Head of caudate nucleus (tissue), 42 donors: ENCODE measurements at regions of chr2 and their contacts with region 1.

Region 1: DNA sequence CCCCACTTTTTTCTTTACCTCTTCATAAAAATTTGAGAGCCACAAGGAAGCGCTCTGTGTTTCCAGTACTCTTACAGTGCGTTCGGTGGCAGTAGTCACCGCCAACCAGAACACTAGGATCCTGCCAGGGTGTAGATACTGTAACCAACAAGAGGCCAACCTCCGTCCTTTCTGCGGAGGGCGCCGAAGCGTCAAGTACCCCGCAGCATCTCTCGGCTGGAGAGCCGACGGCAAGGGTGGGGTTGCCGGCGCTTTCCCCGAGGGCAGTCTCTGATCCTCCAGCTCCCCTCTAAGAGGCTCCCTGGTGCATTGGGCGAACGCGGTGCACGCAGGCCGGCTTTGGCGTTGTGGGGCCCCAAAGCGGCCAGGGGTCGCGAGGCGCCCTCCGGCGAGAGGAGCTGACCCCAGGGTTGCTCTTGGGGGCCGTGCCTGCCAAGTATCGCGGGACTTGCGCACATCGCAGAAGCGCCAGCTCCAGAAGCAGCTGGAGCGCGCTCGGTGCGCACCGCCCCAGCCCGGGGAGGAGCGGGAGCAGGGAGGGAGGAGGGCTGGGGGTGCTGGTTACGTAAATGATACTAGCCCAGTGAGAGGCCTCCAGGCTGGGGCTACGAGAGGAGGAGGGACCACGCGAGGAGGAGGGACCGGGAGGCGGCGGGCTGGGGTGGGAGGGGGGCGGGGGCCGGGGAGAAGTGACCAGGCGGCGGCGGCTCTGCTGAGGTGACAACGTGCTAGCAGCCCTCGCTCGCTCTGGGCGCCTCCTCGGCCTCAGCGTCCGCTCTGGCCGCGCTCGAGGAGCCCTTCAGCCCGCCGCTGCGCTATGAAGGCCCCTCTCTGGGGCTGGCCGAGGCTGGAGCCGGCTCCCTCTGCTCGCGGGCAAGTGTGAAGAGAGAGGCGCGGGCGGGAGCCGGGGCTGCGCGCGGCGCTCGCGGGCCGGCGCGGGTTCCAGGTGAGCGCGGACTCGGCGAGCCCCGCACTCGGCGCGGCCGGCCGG is at the start of gene GALNT13:
- DNase-seq: peak; percentile 76 to 96 (median 91)

Region 2: DNA sequence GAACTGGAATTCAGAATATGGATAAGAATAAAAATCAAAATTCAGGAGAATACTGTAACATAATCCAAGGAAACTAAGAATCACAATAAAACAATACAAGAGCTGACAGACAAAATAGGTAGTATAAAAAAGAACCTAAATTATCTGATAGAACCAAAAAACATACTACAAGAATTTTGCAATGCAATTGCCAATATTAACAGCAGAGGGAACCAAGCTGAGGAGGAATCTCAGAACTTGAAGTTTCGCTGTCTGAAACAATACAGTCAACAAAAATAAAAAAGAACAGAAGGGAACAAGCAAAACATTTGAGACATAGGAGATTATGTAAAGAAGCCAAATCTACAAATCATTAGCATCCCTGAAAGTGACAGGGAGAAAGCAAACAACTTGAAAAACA is 83.9 kb before region 1 on chr2:
- intact Hi-C with region 1: loop called (anchors 10 kb)
- DNase-seq: no peak

Region 3: DNA sequence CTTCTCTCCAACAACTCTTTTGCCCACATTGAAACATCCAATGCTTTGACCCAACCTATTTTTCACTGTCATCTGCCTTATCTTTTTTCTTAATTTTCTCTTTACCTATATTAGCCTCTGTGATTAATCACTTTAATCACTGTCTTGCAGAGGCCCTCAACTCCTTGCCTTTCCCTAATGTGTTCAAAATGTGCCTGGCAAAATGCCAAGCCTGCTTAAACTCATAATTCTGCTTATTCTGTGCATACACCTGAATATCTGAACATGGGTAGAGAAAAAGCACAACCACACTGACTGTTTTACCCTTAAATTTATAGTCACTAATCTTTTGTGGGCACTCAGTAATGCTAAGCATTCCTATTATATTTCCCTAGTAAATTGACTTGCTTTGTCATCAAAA is 62.8 kb before region 1 on chr2:
- intact Hi-C with region 1: loop called (anchors 5 kb)
- DNase-seq: no peak

Region 4: GRCh38 chr2:154375579-154375931 is 504.0 kb after region 1 on chr2:
- intact Hi-C with region 1: loop called (anchors 10 kb)
- DNase-seq: peak in 15 of 42 donors; percentile 3 to 58 (median 15)